PC-9 (cell line): ENCODE measurements at regions of chr1 and their contacts with region 1.

Region 1: DNA sequence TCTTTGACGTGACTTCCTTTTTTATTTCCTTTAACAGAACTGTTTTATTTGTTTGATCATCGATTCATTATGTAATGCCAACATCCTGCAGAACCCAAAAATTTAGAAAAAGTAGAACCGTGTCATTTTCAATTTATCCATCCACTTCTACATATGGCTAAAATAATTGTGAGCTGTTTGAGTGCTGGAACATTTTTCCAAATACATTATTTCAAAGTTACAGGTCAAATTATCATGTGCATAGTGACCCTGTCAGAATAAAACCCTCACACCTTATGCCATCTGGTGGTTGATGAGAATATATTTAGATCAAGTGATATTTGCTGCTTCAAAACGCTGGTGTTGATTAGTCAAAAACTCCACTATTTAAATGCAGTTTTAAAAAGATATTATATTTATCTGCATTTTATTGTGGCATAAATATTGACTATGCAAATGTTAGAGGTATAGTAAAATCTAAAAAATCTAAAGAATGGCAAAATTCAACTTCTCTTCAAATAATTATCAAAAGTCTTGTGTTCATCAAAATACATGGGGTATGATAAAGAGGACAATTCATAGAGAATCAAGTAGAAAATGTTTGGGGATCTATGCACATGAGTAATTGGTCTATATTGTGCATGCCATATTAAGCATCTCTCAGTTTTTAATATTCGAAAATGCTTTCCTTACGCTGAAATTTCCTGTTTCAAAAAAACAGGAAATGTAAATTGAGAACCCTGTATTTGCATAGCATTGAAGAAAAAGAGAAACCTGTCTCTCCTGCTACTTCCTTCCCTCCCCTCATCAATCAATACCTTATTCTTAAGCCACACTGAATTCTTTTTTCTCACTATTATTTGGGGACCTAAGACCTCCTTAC is 39.7 kb downstream of the UBE2U start:
- DNase-seq: no peak
- H3K4me3 ChIP-seq: no peak overlapping the region
- H3K27ac ChIP-seq: no peak overlapping the region
- H3K4me1 ChIP-seq: peaks cover 15% of the 10 kb centered on the region
- H3K27me3 ChIP-seq: no peaks in the 10 kb centered on the region
- CTCF ChIP-seq: peak; percentile 85

Region 2: GRCh38 chr1:63575340-63575826 is 667.7 kb before region 1 on chr1:
- CTCF ChIA-PET with region 1: no interaction called
- POLR2A ChIA-PET with region 1: no interaction called
- intact Hi-C with region 1: loop called (anchors 5 kb)
- DNase-seq: peak in 1 of 2 experiments; percentile 50
- H3K4me3 ChIP-seq: no peak overlapping the region
- H3K27ac ChIP-seq: no peak overlapping the region
- H3K4me1 ChIP-seq: no peaks in the 10 kb centered on the region
- H3K27me3 ChIP-seq: no peaks in the 10 kb centered on the region
- CTCF ChIP-seq: peak; percentile 95

Region 3: GRCh38 chr1:63674238-63674864 is 568.8 kb before region 1 on chr1:
- CTCF ChIA-PET with region 1: interaction called, 8 read pairs
- POLR2A ChIA-PET with region 1: no interaction called
- intact Hi-C with region 1: loop called (anchors 1 kb)
- DNase-seq: peak; percentile 83 to 95
- H3K4me3 ChIP-seq: no peak overlapping the region
- H3K27ac ChIP-seq: peak overlapping the region; percentile 41; the same call in 1 of the 2 replicates
- H3K4me1 ChIP-seq: peaks cover 13% of the 10 kb centered on the region
- H3K27me3 ChIP-seq: no peaks in the 10 kb centered on the region
- CTCF ChIP-seq: peak; percentile 82

Region 4: DNA sequence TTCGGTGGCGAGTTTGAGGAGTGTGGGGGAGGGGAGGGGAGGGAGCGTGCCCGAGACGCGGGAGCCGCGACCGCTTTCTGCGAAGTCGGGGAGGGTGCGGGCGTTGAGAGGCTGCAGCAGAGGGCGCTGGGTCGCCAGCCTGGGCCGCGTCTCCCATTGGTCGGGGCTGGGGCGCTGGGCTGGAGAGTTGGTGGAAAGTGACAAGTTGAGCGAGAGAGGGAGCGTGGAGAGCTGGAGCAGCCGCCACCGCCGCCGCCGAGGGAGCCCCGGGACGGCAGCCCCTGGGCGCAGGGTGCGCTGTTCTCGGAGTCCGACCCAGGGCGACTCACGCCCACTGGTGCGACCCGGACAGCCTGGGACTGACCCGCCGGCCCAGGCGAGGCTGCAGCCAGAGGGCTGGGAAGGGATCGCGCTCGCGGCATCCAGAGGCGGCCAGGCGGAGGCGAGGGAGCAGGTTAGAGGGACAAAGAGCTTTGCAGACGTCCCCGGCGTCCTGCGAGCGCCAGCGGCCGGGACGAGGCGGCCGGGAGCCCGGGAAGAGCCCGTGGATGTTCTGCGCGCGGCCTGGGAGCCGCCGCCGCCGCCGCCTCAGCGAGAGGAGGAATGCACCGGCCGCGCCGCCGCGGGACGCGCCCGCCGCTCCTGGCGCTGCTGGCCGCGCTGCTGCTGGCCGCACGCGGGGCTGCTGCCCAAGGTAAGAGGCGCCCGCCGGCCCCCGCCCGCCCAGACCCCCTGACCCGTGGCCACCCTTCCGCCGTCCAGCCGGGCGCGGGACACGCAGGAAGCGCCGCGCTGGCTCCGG is 469.1 kb before region 1 on chr1 and contains the start of gene ROR1:
- CTCF ChIA-PET with region 1: no interaction called
- POLR2A ChIA-PET with region 1: no interaction called
- intact Hi-C with region 1: loop called (anchors 2 kb)
- DNase-seq: peak; percentile 72 to 91
- H3K4me3 ChIP-seq: peak within 1 kb of the TSS; percentile 93
- H3K27ac ChIP-seq: peak within 1 kb of the TSS; percentile 60
- H3K4me1 ChIP-seq: peaks cover 50% of the 10 kb centered on the region
- H3K27me3 ChIP-seq: no peaks in the 10 kb centered on the region
- CTCF ChIP-seq: peak; percentile 62
- total RNA-seq, gene ROR1: 16.0 and 19.0 TPM in 2 replicates

Region 5: GRCh38 chr1:64171797-64172281 is 71.3 kb before region 1 on chr1:
- CTCF ChIA-PET with region 1: no interaction called
- POLR2A ChIA-PET with region 1: no interaction called
- intact Hi-C with region 1: loop called (anchors 1 kb)
- DNase-seq: peak; percentile 46 to 98
- H3K4me3 ChIP-seq: peak overlapping the region; percentile 22; the same call in 1 of the 2 replicates
- H3K27ac ChIP-seq: peak overlapping the region; percentile 97
- H3K4me1 ChIP-seq: peaks cover 47% of the 10 kb centered on the region
- H3K27me3 ChIP-seq: no peaks in the 10 kb centered on the region
- CTCF ChIP-seq: no peak

Region 6: GRCh38 chr1:64378826-64379225 is 135.7 kb after region 1 on chr1:
- CTCF ChIA-PET with region 1: no interaction called
- POLR2A ChIA-PET with region 1: no interaction called
- intact Hi-C with region 1: no loop called
- DNase-seq: no peak
- H3K4me3 ChIP-seq: no peak overlapping the region
- H3K27ac ChIP-seq: no peak overlapping the region
- H3K4me1 ChIP-seq: no peaks in the 10 kb centered on the region
- H3K27me3 ChIP-seq: no peaks in the 10 kb centered on the region
- CTCF ChIP-seq: no peak